Common myeloid progenitor, CD34-positive (primary cell): ENCODE measurements at regions of chr3 and their contacts with region 1.

Region 1: DNA sequence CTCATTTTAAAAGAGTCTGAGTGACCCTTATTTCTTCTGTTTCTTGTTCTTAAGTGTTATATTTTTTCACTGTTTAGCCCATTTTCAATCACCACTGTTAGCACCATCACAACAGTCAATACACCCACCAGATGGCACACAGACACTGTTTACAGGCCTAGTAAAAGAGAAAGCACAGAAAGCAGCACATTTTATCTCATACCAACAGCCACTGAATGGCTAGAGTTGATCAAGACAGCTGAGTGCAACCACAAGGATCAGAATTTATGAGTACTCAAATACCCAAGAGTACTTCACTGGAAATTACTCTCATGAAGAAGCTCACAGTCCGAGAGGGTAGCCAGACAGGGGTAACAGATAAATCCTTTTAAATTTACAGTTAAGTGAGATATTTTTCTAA is 127.0 kb downstream of the TFDP2 start:
- DNase-seq: peak; percentile 88 to 97 (median 94)
- H3K4me3 ChIP-seq: peak overlapping the region in 2 of 7 experiments; percentile 36 to 47
- H3K27ac ChIP-seq: peak overlapping the region; percentile 2 to 64
- H3K4me1 ChIP-seq: peaks cover 21 to 52% (median 36%) of the 10 kb centered on the region in 4 experiments
- H3K27me3 ChIP-seq: no peaks in the 10 kb centered on the region

Region 2: GRCh38 chr3:142046320-142047020 is 24.1 kb after region 1 on chr3:
- CTCF ChIA-PET with region 1: interaction called, 32 read pairs
- POLR2A ChIA-PET with region 1: interaction called, 3 read pairs
- DNase-seq: peak; percentile 95 to 98 (median 96)
- H3K4me3 ChIP-seq: peak overlapping the region in 5 of 7 experiments; percentile 5 to 62 (median 27)
- H3K27ac ChIP-seq: peak overlapping the region; percentile 68 to 81
- H3K4me1 ChIP-seq: peaks cover 14 to 34% (median 22%) of the 10 kb centered on the region in 4 experiments
- H3K27me3 ChIP-seq: no peaks in the 10 kb centered on the region

Region 3: GRCh38 chr3:142117056-142117851 is 94.9 kb after region 1 on chr3:
- CTCF ChIA-PET with region 1: interaction called, 10 read pairs
- POLR2A ChIA-PET with region 1: no interaction called
- DNase-seq: peak in 2 of 3 donors; percentile 44 to 54
- H3K4me3 ChIP-seq: no peak overlapping the region
- H3K27ac ChIP-seq: no peak overlapping the region
- H3K4me1 ChIP-seq: peaks cover 0 to 10% (median 6%) of the 10 kb centered on the region in 4 experiments
- H3K27me3 ChIP-seq: no peaks in the 10 kb centered on the region

Region 4: DNA sequence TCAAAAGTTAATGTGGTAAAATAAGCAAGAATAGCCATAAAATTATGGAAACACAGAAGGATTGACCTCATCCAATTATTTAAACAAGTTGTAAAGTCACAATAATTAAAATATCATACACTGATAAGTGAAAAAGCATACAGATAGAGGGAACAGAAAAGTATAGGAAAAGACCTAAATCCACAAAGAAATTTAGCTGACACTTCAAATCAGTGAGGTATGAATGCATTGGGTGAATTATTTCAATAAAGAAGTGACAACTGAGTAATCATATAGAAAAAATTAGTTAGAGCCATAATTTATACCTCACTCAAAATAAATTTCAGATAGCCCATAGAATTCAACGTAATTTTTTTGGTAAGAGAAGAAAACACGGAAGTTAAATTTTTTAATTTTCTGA is 101.9 kb after region 1 on chr3:
- CTCF ChIA-PET with region 1: interaction called, 13 read pairs
- POLR2A ChIA-PET with region 1: no interaction called
- DNase-seq: no peak
- H3K4me3 ChIP-seq: no peak overlapping the region
- H3K27ac ChIP-seq: no peak overlapping the region
- H3K4me1 ChIP-seq: peaks cover 0 to 7% (median 3%) of the 10 kb centered on the region in 4 experiments
- H3K27me3 ChIP-seq: no peaks in the 10 kb centered on the region

Region 5: DNA sequence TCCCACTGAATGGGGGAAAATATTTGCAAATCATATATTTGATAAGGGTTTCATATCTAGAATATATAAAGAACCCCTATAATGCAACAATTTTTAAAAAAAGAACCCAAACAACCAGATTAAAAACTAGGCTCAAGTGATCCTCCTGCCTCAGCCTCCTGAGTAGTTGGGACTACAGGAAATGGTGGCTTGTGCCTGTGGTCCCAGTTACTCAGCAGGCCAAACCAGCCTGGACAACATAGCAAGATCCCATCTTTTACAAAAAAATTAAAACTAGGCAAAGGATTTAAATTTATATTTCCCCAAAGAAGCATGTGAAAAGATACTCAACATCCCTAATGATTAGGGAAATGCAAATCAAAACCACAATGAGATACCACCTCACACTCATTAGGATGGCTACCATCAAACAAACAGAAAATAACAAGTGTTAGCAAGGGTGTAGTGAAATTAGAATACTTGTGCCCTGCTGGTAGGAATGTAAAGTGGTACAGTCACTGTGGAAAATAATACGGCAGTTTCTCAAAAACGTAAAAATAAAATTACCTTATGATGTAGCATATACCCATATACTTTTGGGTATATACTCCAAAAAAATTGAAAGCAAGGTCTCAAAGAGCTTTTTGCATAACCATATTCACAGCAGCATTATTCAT is 107.3 kb after region 1 on chr3:
- CTCF ChIA-PET with region 1: interaction called, 13 read pairs
- POLR2A ChIA-PET with region 1: no interaction called
- DNase-seq: peak in 1 of 3 donors; percentile 10
- H3K4me3 ChIP-seq: no peak overlapping the region
- H3K27ac ChIP-seq: no peak overlapping the region
- H3K4me1 ChIP-seq: peaks cover 0 to 9% (median 3%) of the 10 kb centered on the region in 4 experiments
- H3K27me3 ChIP-seq: no peaks in the 10 kb centered on the region

Region 6: DNA sequence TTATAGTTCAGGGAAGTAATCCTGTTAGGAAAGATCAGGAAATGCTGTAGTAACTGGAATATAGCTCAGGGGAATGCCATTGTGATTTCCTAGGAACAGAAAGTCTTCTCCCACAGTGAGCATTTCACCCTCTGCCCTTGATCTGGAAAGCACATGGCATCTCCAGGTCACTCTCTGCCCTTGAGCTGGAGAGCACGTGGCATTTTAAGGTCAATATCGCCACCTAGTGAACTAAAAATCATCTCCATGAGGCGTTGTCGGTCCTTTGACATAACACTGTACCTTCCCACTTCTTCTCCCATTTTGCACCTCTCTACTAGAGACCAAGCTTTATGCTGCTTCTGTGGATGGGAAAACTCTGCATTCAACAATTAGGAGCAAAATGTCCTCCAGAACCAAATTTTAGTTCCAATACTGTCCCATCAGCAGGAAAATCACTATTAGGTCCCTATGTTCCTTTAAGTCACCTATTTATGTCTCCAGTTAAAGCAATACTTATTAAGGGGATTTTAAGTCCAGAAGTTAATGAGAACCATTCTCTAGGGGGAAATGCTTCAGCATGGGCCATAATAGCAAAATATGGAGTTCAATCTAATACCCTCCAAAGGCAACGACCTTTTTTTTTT is 257.7 kb after region 1 on chr3:
- CTCF ChIA-PET with region 1: interaction called, 16 read pairs
- POLR2A ChIA-PET with region 1: no interaction called
- DNase-seq: peak; percentile 68 to 82 (median 78)
- H3K4me3 ChIP-seq: no peak overlapping the region
- H3K27ac ChIP-seq: no peak overlapping the region
- H3K4me1 ChIP-seq: peaks cover 0 to 18% (median 10%) of the 10 kb centered on the region in 4 experiments
- H3K27me3 ChIP-seq: no peaks in the 10 kb centered on the region